ENCODE measurements at regions of chr14 and their contacts with region 1.

Region 1: DNA sequence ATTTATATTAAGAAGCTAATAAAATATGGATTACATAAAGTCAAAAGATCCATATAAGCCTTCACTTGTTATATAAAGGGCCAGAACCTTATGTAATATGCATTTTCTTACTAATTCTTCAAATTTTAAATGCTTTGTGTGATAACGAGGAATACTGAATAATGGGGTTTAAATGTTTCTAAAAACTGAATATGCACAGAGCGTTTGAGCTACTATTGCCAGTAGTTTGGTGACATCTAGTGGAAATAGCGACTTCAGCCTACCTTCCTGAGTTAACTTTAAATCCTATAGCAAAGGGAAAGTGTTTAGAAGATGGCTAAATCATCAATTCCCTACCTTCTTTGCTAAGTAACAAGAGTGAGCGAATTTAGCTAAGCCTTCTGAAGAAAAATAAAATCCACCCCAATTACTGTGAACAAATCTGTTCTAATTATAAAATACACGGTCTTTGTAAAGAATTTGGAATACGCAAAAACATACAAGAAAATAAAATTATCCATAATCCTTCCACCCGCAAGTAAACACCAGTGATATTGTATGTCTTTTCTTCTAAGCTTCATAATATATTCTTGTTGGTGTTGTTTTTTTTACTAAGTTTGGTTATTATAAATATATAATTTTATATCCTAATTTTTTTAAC is 115.5 kb upstream of the G2E3 start:
- DNase-seq: no peak
- H3K4me3 ChIP-seq: no peak overlapping the region
- H3K27ac ChIP-seq: no peak overlapping the region
- H3K27me3 ChIP-seq: no peaks in the 10 kb centered on the region
- CTCF ChIP-seq: peak; percentile 31 to 79 (median 62)

Region 2: DNA sequence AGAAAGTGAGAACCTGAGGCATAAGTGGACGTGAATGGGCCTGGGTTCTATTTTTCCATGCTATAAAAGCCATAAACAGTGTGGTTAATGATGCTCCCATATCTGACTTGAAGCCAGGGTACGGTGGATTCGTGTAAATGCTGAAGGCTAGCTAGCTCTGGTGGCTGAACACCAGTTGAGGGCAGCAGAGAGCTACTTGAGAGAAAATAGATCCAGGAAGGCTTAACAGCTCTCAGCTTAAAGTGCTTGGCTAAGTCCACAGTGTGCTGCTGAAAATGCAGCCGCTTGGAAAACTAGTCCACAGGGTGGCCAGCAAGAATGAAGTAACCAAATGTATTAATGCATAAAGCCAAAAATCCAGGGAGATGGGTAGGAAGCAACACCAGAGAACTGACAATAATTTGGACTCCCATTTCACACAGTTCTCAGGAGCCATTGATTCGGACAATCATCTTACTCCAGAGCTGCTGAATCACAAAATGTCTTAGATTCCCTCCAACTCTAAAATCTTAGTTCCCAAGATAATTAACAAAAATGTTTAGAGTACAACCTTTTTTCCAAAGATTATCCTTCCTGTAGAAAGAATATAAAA is 1691.9 kb before region 1 on chr14:
- intact Hi-C with region 1: loop called (anchors 5 to 10 kb)
- DNase-seq: peak in 4 of 10 donors; percentile 45 to 63 (median 52)
- H3K4me3 ChIP-seq: no peak overlapping the region
- H3K27ac ChIP-seq: no peak overlapping the region
- H3K27me3 ChIP-seq: peaks cover 0 to 33% (median 0%) of the 10 kb centered on the region in 45 donors
- CTCF ChIP-seq: peak; percentile 36 to 75 (median 58)

Region 3: GRCh38 chr14:28756884-28757570 is 1686.5 kb before region 1 on chr14:
- intact Hi-C with region 1: loop called (anchors 5 to 10 kb)
- DNase-seq: peak in 3 of 10 donors; percentile 46 to 56 (median 55)
- H3K4me3 ChIP-seq: peak overlapping the region in 56 of 59 donors; percentile 15 to 80 (median 42)
- H3K27ac ChIP-seq: peak overlapping the region in 54 of 59 donors; percentile 1 to 98 (median 93)
- H3K27me3 ChIP-seq: peaks cover 0 to 83% (median 33%) of the 10 kb centered on the region in 45 donors
- CTCF ChIP-seq: peak; percentile 37 to 77 (median 66)

Region 4: DNA sequence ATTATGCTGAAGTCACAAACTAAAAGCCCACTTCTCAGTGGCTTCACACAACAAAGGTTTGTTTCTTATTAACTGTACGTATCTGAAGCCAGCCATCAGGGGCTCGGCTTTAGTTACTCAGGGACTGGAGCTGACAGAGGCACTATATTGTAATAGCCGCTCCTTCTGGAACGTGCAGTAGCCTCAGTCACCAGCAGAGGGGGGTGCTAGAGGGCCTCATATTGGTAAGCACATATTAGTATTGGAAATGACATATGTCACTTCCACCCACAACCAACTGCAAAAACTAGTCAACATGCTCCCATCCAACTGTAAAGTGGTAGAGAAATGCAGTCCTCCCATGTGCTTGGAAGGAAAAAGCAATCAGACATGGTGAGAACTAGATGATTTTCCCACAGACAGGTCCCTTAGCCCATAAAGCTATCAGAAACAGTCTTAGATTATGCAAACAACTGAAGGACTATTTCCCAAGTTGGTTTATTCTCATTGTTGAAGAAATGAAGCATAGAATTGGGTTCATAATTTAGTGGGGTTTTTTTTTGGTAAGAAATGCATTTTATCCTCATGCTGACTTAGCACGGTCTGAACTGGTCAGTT is 68.1 kb before region 1 on chr14:
- intact Hi-C with region 1: loop called in 1 of 2 experiments (anchors 10 kb)
- DNase-seq: peak in 6 of 10 donors; percentile 35 to 73 (median 50)
- H3K4me3 ChIP-seq: no peak overlapping the region
- H3K27ac ChIP-seq: no peak overlapping the region
- H3K27me3 ChIP-seq: peaks cover 0 to 4% (median 0%) of the 10 kb centered on the region in 45 donors
- CTCF ChIP-seq: peak; percentile 29 to 82 (median 66)

Measured in dorsolateral prefrontal cortex (tissue), 120 donors.